Mammary epithelial cell (primary cell): ENCODE measurements at regions of chr7 and their contacts with region 1.

Region 1: GRCh38 chr7:42911454-42912447 is at the start of gene C7orf25:
- DNase-seq: peak; percentile 90
- H3K4me3 ChIP-seq: peak within 1 kb of the TSS; percentile 51 to 90 (median 75)
- H3K27ac ChIP-seq: peak within 1 kb of the TSS; percentile 59
- H3K4me1 ChIP-seq: peaks cover 34% of the 10 kb centered on the region
- H3K27me3 ChIP-seq: no peaks in the 10 kb centered on the region
- CTCF ChIP-seq: peak in 1 of 2 donors; percentile 3
- total RNA-seq, gene C7orf25: 7.0 to 8.2 TPM

Region 2: GRCh38 chr7:42886129-42886528 is 25.6 kb before region 1 on chr7:
- CTCF ChIA-PET with region 1: no interaction called
- dilution Hi-C with region 1: no loop called
- in situ Hi-C with region 1: no loop called
- intact Hi-C with region 1: loop called (anchors 2 kb)
- DNase-seq: peak; percentile 14
- H3K4me3 ChIP-seq: no peak overlapping the region
- H3K27ac ChIP-seq: no peak overlapping the region
- H3K4me1 ChIP-seq: peaks cover 22% of the 10 kb centered on the region
- H3K27me3 ChIP-seq: no peaks in the 10 kb centered on the region
- CTCF ChIP-seq: peak; percentile 40 to 41

Region 3: DNA sequence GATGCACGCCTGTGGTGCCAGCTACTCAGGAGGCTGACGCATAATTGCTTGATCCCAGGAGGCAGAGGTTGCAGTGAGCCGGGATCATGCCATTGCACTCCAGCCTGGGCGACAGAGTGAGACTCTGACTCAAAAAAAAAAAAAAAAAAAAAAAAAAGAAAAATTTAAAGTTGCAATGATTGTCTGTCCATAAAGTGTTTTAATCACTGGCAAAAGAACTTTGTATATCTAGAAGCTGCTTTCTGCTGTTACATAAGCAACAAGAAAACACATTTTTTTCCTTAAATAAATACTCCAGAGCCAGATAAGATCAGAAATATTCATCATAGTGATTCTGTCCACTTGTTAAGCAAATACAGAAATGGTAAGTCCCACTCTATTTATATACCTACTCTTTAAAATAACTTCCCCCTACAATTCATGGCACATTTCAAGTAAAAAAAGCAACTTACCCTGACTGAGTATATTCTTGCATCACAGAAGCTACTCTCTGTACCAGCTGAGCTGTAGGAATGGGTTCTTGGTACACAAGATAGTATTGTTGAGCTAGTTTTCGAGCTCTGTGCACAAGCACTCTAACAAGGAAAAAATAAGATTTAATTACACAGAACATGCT is 12.6 kb after region 1 on chr7:
- CTCF ChIA-PET with region 1: no interaction called
- dilution Hi-C with region 1: no loop called
- in situ Hi-C with region 1: no loop called
- intact Hi-C with region 1: loop called (anchors 1 kb)
- DNase-seq: no peak
- H3K4me3 ChIP-seq: no peak overlapping the region
- H3K27ac ChIP-seq: peak overlapping the region; percentile 56
- H3K4me1 ChIP-seq: peaks cover 33% of the 10 kb centered on the region
- H3K27me3 ChIP-seq: no peaks in the 10 kb centered on the region
- CTCF ChIP-seq: no peak

Region 4: DNA sequence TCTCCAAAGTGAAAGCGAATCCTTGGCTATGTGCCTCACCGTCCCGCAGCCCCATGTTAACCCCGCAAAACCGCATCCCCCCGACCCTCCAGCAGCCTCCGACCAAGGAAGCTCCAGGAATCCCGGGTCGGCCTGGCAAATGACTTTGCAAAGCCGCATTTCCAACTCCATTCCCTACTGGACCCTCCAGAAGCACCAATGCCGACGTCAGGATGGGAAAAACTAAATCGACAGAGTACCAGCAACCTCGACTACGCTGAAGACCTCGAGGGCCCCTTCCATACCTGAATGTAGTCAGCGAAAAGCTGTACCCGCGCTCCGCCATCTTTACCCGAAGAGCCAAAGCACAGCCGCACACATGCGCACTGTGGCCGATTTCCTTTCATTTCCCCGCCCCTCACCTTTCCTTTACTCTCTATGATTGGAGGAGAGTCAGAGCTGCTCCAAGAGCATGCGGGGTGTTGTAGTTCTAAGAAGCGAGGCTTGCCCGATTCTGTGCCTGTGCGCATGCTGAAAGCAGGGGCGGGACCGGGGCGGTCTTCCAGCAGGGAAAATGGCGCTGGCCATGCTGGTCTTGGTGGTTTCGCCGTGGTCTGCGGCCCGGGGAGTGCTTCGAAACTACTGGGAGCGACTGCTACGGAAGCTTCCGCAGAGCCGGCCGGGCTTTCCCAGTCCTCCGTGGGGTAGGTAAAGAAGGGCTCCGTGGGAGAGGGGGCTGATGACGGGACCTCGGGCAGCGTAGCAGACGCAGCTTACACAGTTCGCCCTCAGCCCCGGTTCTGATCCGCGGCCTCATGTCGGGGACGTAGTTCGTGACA is 20.3 kb after region 1 on chr7 and contains the starts of genes MRPL32 and PSMA2:
- CTCF ChIA-PET with region 1: interaction called, 4 read pairs
- dilution Hi-C with region 1: no loop called
- in situ Hi-C with region 1: no loop called
- intact Hi-C with region 1: loop called (anchors 2 kb)
- DNase-seq: peak; percentile 97
- H3K4me3 ChIP-seq: peak within 1 kb of the TSS; percentile 78 to 92 (median 88)
- H3K27ac ChIP-seq: peak within 1 kb of the TSS; percentile 91
- H3K4me1 ChIP-seq: peaks cover 29% of the 10 kb centered on the region
- H3K27me3 ChIP-seq: no peaks in the 10 kb centered on the region
- CTCF ChIP-seq: no peak
- total RNA-seq, gene MRPL32: 29.2 to 77.0 TPM
- total RNA-seq, gene PSMA2: 54.0 to 97.0 TPM